ENCODE measurements at regions of chr2 and their contacts with region 1.

Region 1: DNA sequence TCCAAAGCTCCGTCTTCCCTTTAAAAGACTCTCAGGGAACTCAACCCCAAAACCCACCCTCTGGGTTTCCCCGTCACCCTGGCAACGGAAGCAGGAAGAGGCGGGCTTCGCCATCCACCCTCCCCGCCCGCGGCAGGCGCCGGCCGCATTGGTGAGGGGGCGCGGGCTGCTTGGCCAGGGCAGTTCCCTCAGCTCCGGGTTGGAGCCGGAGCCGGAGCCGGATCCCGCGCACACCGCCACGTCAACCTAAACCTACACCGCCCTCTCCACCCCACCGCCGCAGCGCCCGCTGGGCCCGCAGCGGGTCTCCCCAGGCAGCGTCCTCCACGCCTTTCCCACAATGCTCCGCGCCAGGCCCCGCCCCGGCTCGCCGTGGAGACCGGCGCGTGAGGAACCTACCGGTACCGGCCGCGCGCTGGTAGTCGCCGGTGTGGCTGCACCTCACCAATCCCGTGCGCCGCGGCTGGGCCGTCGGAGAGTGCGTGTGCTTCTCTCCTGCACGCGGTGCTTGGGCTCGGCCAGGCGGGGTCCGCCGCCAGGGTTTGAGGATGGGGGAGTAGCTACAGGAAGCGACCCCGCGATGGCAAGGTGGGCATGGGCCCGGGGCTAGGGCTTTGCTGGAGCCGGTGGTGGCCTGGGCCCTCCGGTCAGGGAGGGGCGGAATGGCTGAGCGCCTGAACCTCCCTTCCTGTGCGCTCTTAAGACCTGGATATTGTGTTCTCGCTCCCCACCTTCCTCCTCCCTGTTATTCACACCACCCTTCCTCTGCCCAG is at the start of gene DNAJC10:
- DNase-seq: peak; percentile 79 to 91 (median 86)
- ATAC-seq: peak; percentile 91
- H3K4me3 ChIP-seq: peak within 1 kb of the TSS; percentile 86
- H3K4me3 Mint-ChIP-seq: no peak within 1 kb of the TSS
- H3K27ac ChIP-seq: peak within 1 kb of the TSS; percentile 73
- H3K27ac Mint-ChIP-seq: no peak within 1 kb of the TSS
- H3K4me1 ChIP-seq: peaks cover 9 to 16% of the 10 kb centered on the region in 2 donors
- H3K4me1 Mint-ChIP-seq: peaks cover 0 to 13% (median 9%) of the 10 kb centered on the region in 7 donors
- H3K27me3 ChIP-seq: no peaks in the 10 kb centered on the region
- H3K27me3 Mint-ChIP-seq: peaks cover 0 to 11% (median under 1%) of the 10 kb centered on the region in 5 donors
- total RNA-seq, gene DNAJC10: 35.9 to 70.4 (median 55.6) TPM

Region 2: GRCh38 chr2:181891966-181892798 is 823.9 kb before region 1 on chr2:
- CTCF ChIA-PET with region 1: no interaction called
- POLR2A ChIA-PET with region 1: no interaction called
- intact Hi-C with region 1: loop called (anchors 2 to 5 kb)
- DNase-seq: peak; percentile 37 to 68 (median 65)
- ATAC-seq: peak; percentile 66
- H3K4me3 ChIP-seq: peak overlapping the region; percentile 85
- H3K4me3 Mint-ChIP-seq: peak overlapping the region; percentile 90 to 99 (median 97)
- H3K27ac ChIP-seq: peak overlapping the region; percentile 76
- H3K27ac Mint-ChIP-seq: peak overlapping the region; percentile 74 to 93 (median 89)
- H3K4me1 ChIP-seq: peaks cover 4 to 22% of the 10 kb centered on the region in 2 donors
- H3K4me1 Mint-ChIP-seq: peaks cover 25 to 49% (median 44%) of the 10 kb centered on the region in 7 donors
- H3K27me3 ChIP-seq: no peaks in the 10 kb centered on the region
- H3K27me3 Mint-ChIP-seq: peaks cover 11 to 35% (median 20%) of the 10 kb centered on the region in 5 donors

Region 3: DNA sequence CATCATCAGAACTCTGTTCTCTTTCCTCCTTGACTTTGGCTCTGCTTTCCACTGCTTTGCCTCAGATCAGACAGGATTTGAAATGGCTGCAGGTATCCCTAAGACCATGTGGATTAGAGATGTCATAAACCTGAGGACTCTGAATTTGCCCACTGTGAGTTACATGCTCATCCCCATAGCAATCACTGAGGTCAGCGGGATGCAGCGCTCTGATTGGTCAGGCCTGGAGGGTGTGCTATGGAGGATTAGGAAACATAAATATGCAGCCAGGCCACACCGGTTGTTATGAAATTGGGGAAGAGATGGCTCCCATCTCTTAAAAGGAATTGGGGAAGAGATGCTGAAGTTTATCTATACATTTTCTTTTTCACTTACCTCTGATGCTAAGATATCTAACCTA is 73.8 kb before region 1 on chr2:
- CTCF ChIA-PET with region 1: no interaction called
- POLR2A ChIA-PET with region 1: no interaction called
- intact Hi-C with region 1: no loop called
- DNase-seq: peak in 3 of 9 donors; percentile 7 to 18 (median 12)
- ATAC-seq: peak; percentile 60
- H3K4me3 ChIP-seq: no peak overlapping the region
- H3K4me3 Mint-ChIP-seq: no peak overlapping the region
- H3K27ac ChIP-seq: no peak overlapping the region
- H3K27ac Mint-ChIP-seq: no peak overlapping the region
- H3K4me1 ChIP-seq: no peaks in the 10 kb centered on the region
- H3K4me1 Mint-ChIP-seq: peaks cover 0 to 1% (median 0%) of the 10 kb centered on the region in 7 donors
- H3K27me3 ChIP-seq: no peaks in the 10 kb centered on the region
- H3K27me3 Mint-ChIP-seq: peaks cover 0 to 8% (median 5%) of the 10 kb centered on the region in 5 donors

Region 4: DNA sequence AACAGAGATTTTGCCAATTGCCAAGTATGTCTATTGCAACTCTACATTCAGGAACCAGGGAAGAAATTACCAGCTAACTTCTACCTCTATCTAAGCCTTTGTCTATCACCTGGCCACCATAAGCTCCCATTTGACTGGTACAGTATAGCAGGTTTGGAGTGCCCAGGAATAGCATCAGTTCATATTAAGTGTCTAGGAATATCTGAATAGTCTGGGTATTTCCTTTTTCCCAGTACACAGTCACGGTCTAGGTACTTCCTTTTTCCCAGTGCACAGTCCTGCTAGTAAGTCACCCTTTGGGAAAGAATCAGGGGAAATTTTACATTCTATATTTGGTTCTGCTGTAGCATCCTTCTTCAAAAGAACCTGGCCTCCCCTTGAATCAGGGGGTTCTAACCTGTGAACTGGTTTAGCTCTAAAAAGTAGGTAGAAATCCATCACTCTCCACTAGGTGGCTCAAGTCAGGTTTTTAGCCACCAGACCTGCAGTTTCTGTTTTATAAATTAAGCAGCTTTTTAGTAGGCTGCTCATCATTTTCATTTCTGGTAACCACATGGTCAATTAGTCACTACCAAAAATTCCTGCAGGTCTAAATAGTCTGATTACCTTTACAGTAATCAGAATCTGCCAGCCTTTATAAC is 49.3 kb before region 1 on chr2:
- CTCF ChIA-PET with region 1: interaction called, 4 read pairs
- POLR2A ChIA-PET with region 1: no interaction called
- intact Hi-C with region 1: loop called (anchors 1 kb)
- DNase-seq: peak in 6 of 9 donors; percentile 6 to 40 (median 20)
- ATAC-seq: peak; percentile 70
- H3K4me3 ChIP-seq: no peak overlapping the region
- H3K4me3 Mint-ChIP-seq: no peak overlapping the region
- H3K27ac ChIP-seq: no peak overlapping the region
- H3K27ac Mint-ChIP-seq: no peak overlapping the region
- H3K4me1 ChIP-seq: no peaks in the 10 kb centered on the region
- H3K4me1 Mint-ChIP-seq: no peaks in the 10 kb centered on the region
- H3K27me3 ChIP-seq: no peaks in the 10 kb centered on the region
- H3K27me3 Mint-ChIP-seq: peaks cover 0 to 29% (median 0%) of the 10 kb centered on the region in 5 donors

Region 5: GRCh38 chr2:182980115-182980514 is 264.0 kb after region 1 on chr2:
- CTCF ChIA-PET with region 1: no interaction called
- POLR2A ChIA-PET with region 1: no interaction called
- intact Hi-C with region 1: loop called in 1 of 2 experiments (anchors 5 kb)
- DNase-seq: peak in 5 of 9 donors; percentile 11 to 35 (median 21)
- ATAC-seq: no peak
- H3K4me3 ChIP-seq: no peak overlapping the region
- H3K4me3 Mint-ChIP-seq: no peak overlapping the region
- H3K27ac ChIP-seq: no peak overlapping the region
- H3K27ac Mint-ChIP-seq: no peak overlapping the region
- H3K4me1 ChIP-seq: no peaks in the 10 kb centered on the region
- H3K4me1 Mint-ChIP-seq: peaks cover 0 to 3% (median 0%) of the 10 kb centered on the region in 7 donors
- H3K27me3 ChIP-seq: no peaks in the 10 kb centered on the region
- H3K27me3 Mint-ChIP-seq: no peaks in the 10 kb centered on the region

Region 6: DNA sequence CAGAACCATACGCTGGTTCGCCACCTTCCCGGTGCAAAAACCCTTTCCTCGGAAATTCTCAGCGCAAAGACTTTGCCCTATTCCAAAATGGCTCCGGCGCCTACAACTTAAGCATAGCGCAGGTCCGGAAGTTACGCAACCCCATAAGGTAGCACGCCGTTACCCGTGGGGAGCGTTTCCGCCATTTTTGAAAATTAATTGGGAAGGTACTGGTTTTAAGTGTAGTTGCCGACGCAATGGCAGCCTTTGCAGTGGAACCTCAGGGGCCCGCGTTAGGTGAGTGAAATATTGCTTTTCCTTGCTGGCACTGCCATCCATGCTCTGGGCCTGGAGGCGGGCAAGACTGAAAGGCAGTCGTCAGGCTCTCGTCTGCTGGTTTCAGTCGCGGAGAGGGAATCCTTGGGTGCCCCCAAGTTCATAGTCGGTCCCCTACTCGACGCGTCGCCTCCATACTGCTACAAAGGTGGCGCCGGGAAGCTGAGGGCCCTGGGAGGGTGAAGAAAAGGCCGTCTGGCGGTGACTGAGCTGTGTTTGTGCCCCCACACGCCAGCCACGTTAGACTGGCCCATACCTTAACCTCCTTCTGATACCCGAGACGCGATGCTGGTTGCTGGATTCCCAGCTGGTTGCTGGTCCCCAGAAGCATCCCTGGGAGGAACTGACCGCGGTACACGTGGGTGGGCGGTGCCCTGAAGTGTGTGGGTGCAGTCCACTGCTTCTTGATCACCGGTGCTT is 408.3 kb after region 1 on chr2 and contains the start of gene NUP35:
- CTCF ChIA-PET with region 1: interaction called, 3 read pairs
- POLR2A ChIA-PET with region 1: no interaction called
- intact Hi-C with region 1: loop called (anchors 1 kb)
- DNase-seq: peak; percentile 67 to 87 (median 83)
- ATAC-seq: peak; percentile 97
- H3K4me3 ChIP-seq: peak within 1 kb of the TSS; percentile 96
- H3K4me3 Mint-ChIP-seq: peak within 1 kb of the TSS; percentile 90 to 100 (median 96)
- H3K27ac ChIP-seq: peak within 1 kb of the TSS; percentile 74
- H3K27ac Mint-ChIP-seq: peak within 1 kb of the TSS; percentile 93 to 98 (median 97)
- H3K4me1 ChIP-seq: peaks cover 8 to 15% of the 10 kb centered on the region in 2 donors
- H3K4me1 Mint-ChIP-seq: peaks cover 21 to 48% (median 35%) of the 10 kb centered on the region in 7 donors
- H3K27me3 ChIP-seq: no peaks in the 10 kb centered on the region
- H3K27me3 Mint-ChIP-seq: peaks cover 7 to 29% (median 17%) of the 10 kb centered on the region in 5 donors
- total RNA-seq, gene NUP35: 12.5 to 25.3 (median 19.7) TPM

Measured in naive thymus-derived CD4-positive, alpha-beta T cell (primary cell).